Activated CD4-positive, alpha-beta T cell treated with anti-CD3 and anti-CD28 coated beads for 36 hours (primary cell): ENCODE measurements at regions of chr14 and their contacts with region 1.

Region 1: DNA sequence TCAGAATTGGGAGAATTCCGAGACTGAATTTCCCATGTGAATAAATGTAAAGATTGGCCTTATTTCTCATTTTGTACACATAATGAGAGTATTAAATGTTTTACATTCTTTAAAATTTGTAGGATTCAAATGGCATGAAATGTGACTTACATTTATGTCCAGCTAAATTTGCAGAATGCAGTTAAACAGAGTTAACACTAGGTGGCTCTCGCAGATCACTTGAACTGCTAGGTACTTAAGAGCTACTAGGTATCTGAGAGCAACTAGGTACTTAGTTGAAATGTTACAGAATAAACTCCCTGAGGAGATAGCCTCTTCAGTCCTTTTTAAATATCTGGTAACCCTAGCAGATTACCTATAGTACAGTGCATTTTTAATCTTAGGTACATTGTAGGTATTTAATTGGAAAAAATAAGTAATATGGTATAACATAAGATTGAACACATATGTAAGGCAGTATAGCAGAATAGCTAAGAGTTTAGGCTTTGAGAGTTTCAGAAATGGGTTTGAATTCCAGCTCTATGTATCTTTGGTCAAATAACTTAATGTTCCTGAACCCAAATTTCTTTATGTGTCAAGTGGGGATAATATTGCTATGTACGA is 73.8 kb downstream of the KIAA0586 start:
- DNase-seq: peak; percentile 33
- ATAC-seq: peak; percentile 64
- H3K4me3 Mint-ChIP-seq: no peak overlapping the region
- H3K27ac Mint-ChIP-seq: no peak overlapping the region
- H3K4me1 Mint-ChIP-seq: no peaks in the 10 kb centered on the region
- H3K27me3 Mint-ChIP-seq: no peaks in the 10 kb centered on the region

Region 2: DNA sequence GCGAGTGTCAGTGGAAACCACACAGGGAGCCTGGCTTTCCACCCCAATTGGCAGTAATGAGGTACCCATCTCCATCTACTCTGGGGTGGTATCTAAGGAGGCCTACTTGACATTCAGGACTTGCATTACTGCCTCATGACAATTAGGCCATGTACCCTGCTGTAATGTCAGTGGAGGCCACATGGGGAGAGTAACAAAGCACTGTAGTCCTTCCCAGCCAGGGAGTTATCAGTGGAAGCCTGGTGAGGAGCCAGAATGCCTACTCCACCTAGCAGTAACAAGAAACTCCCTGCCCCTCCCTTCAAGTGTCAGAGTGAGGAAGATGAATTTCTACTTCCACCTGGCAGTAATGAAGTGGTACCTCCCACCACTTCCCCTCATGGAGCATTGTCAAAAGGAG is 86.5 kb before region 1 on chr14:
- CTCF ChIA-PET with region 1: no interaction called
- POLR2A ChIA-PET with region 1: no interaction called
- intact Hi-C with region 1: no loop called
- DNase-seq: no peak
- ATAC-seq: peak; percentile 55
- H3K4me3 Mint-ChIP-seq: no peak overlapping the region
- H3K27ac Mint-ChIP-seq: no peak overlapping the region
- H3K4me1 Mint-ChIP-seq: peaks cover 18% of the 10 kb centered on the region
- H3K27me3 Mint-ChIP-seq: no peaks in the 10 kb centered on the region

Region 3: DNA sequence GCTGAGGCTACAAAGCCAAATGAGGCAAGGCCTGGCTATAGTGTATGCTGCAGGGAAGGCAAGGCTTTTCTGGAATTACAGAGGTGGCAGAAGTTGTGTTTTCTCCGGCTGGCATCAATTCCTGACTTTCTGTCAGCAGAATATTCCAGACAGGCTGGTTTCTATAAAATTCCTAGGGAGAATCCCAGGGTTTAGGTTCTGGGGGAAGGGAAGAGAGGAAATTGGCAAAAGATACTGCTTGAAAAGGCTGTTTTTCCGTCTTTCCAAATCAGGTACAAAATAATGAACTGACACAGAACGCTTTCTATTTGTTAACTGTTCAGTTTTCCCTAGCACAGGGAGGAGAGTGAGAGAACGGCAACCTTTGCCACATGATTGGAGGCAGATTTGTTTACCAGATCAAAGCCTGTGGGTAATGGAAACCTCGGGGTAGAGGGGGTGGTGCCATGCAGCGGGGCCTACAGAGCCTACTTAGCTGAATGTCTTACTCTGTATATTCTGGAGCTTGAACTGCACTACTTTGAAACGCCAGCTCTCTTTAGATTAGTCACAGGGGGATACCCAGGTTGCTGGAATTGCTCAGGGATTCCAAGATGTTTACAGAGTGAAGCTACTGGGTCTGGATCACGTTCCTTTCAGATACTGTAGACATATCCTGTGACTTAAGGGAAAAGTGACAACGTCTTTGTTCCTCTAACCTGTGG is 70.6 kb after region 1 on chr14:
- CTCF ChIA-PET with region 1: interaction called, 8 read pairs
- POLR2A ChIA-PET with region 1: no interaction called
- intact Hi-C with region 1: loop called (anchors 2 to 5 kb)
- DNase-seq: peak; percentile 83
- ATAC-seq: peak; percentile 90
- H3K4me3 Mint-ChIP-seq: peak overlapping the region; percentile 45
- H3K27ac Mint-ChIP-seq: peak overlapping the region; percentile 93
- H3K4me1 Mint-ChIP-seq: peaks cover 44% of the 10 kb centered on the region
- H3K27me3 Mint-ChIP-seq: no peaks in the 10 kb centered on the region

Region 4: GRCh38 chr14:58826845-58827686 is 325.8 kb after region 1 on chr14:
- CTCF ChIA-PET with region 1: interaction called, 4 read pairs
- POLR2A ChIA-PET with region 1: no interaction called
- intact Hi-C with region 1: loop called in 1 of 2 experiments (anchors 5 kb)
- DNase-seq: no peak
- ATAC-seq: no peak
- H3K4me3 Mint-ChIP-seq: no peak overlapping the region
- H3K27ac Mint-ChIP-seq: no peak overlapping the region
- H3K4me1 Mint-ChIP-seq: no peaks in the 10 kb centered on the region
- H3K27me3 Mint-ChIP-seq: peaks cover 3% of the 10 kb centered on the region

Region 5: DNA sequence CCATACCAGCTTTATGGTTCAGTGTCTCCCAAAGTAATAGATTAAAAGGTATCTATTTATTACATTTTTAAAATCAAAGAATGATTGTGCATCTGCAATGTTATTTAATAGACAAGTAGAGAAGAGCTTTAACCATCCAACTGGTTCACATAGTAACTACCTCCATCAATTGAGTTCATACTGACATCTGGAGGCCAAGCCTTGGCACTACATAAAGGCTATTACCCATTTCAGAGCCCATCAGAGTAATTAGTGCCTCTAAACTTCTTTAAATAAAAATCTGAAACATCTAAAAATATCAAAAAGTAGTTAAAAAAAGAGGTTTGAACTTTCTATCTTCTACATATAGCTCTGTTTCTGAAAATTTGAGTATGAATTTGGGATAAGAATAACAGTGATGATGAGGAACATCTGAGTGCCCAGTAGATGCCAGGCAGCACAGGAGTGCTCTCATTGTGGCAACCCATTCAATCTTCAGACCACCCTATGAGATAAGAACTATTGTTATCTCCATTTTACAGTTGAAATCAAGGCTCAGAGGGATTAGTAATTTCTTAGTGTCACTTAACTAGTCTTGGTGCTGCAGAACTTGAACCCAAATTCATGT is 554.2 kb after region 1 on chr14:
- CTCF ChIA-PET with region 1: interaction called, 12 read pairs
- POLR2A ChIA-PET with region 1: no interaction called
- intact Hi-C with region 1: loop called (anchors 1 kb)
- DNase-seq: peak; percentile 38
- ATAC-seq: peak; percentile 61
- H3K4me3 Mint-ChIP-seq: no peak overlapping the region
- H3K27ac Mint-ChIP-seq: no peak overlapping the region
- H3K4me1 Mint-ChIP-seq: no peaks in the 10 kb centered on the region
- H3K27me3 Mint-ChIP-seq: peaks cover 2% of the 10 kb centered on the region